Activated CD8-positive, alpha-beta T cell treated with anti-CD3 and anti-CD28 coated beads for 36 hours (primary cell): ENCODE measurements at regions of chr11 and their contacts with region 1.

Region 1: DNA sequence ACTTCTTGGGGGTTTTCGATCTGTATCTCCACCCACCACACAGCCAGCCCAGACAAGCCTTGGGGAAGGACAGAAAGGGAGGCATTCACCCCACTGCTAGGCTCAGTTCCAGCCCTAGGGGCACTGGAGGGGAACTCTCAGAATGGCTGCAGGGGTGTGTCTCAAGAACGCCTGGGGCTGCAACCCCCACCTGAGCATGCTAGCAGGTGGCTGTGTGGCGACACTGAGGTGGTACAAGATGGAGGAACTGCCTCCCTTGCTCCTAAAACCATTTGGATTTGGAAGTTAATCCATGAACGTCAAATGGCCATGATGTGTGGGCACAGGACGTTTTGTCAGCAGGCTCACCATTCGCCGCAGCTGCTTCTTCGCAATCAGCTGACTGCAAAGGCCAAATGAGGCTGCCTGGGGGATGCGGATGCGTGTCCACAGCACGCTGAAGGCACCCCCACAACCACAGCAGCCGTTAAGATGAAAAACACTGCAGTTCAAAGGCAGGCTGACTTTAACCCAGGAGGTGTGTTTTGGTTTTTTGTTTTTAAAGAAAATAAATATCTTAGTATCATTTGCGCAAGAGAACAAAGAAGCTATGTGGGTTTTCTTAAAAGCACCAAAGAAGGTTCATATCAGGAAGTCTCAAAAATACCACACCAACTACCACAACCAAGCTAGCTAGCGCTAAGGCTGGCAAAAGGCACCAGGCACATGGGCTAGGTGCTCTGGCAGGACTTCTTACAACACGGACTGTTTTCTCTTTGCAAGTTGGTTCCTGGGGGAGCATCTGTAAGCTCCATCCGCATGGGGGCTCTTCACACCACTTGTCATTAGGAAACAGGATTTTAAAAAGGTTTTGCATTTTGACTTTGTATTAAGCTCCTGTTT is 22.2 kb upstream of the NAP1L4 start:
- DNase-seq: peak; percentile 92
- ATAC-seq: peak; percentile 79
- H3K4me3 Mint-ChIP-seq: peak overlapping the region; percentile 31
- H3K27ac Mint-ChIP-seq: peak overlapping the region; percentile 91
- H3K4me1 Mint-ChIP-seq: peaks cover 70% of the 10 kb centered on the region
- H3K27me3 Mint-ChIP-seq: no peaks in the 10 kb centered on the region
- CTCF ChIP-seq: peak; percentile 23

Region 2: DNA sequence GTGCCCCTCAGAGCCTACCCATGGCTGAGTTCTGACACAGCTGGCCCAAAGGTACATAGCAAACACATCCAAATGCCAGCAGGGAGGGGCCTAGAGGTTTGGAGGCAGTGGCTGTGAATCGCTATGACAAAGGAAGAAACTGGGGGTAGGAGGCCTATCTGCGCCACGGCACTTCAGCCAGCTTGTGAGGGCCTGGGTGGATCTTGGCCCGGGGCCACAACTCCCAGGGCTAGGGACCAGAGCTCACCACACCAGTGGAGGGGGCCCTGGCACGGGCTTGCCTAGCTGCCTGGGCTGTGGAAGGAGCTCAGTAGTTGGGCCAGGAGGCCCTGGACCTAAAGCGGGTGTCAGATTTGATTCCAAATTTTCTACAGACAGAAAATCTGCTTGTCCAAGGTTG is 12.8 kb before region 1 on chr11:
- CTCF ChIA-PET with region 1: interaction called, 5 read pairs
- POLR2A ChIA-PET with region 1: interaction called, 13 read pairs
- intact Hi-C with region 1: no loop called
- DNase-seq: no peak
- ATAC-seq: no peak
- H3K4me3 Mint-ChIP-seq: no peak overlapping the region
- H3K27ac Mint-ChIP-seq: no peak overlapping the region
- H3K4me1 Mint-ChIP-seq: peaks cover 10% of the 10 kb centered on the region
- H3K27me3 Mint-ChIP-seq: no peaks in the 10 kb centered on the region
- CTCF ChIP-seq: no peak